Activated CD8-positive, alpha-beta T cell treated with anti-CD3 and anti-CD28 coated beads for 36 hours (primary cell): ENCODE measurements at regions of chr3 and their contacts with region 1.

Region 1: DNA sequence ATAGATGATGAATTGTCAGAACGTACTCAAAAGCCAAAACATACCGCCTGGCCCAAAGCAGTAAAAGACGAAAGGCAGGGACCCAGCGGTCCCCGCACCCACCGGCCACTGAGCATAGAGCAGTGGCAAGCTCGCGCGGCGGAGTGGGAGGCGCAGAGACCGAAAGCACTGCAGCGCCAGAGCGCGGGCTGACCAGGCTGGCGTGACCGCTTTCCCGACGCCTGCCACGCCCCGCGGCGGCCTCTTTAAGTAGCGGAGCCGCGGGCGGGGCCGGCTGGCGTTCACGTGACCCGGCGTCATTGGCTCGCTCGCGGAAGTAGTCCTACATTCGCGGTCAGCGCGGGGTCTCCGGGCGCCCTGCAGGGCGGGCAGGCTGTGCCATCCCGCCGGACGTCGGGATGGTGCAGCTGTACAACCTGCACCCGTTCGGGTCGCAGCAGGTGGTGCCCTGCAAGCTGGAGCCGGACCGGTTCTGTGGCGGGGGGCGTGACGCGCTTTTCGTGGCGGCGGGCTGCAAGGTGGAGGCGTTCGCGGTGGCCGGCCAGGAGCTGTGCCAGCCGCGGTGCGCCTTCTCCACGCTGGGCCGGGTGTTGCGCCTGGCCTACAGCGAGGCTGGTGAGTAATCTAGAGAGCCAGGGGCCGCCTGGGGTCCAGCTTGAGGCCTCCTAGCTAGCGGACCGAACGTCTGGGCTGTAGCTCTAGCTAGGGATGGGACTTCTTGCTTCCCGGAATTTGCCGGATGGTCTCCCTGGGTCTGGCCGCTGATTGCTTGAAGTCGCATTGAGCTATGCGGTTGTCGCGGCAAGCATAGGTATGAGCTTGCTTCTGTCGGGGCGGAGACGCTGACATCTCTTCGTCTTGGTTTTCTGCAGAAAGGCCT is at the start of gene HPS3:
- DNase-seq: peak; percentile 91
- ATAC-seq: peak; percentile 89
- H3K4me3 Mint-ChIP-seq: peak within 1 kb of the TSS; percentile 95
- H3K27ac Mint-ChIP-seq: peak within 1 kb of the TSS; percentile 89
- H3K4me1 Mint-ChIP-seq: peaks cover 36% of the 10 kb centered on the region
- H3K27me3 Mint-ChIP-seq: peaks cover 2% of the 10 kb centered on the region
- CTCF ChIP-seq: no peak
- total RNA-seq, gene HPS3: 16.4 to 18.2 TPM

Region 2: GRCh38 chr3:148991194-148992026 is 138.2 kb before region 1 on chr3 and contains the start of gene GYG1:
- CTCF ChIA-PET with region 1: no interaction called
- POLR2A ChIA-PET with region 1: no interaction called
- intact Hi-C with region 1: loop called (anchors 5 kb)
- DNase-seq: peak; percentile 81
- ATAC-seq: peak; percentile 87
- H3K4me3 Mint-ChIP-seq: peak within 1 kb of the TSS; percentile 79
- H3K27ac Mint-ChIP-seq: peak within 1 kb of the TSS; percentile 86
- H3K4me1 Mint-ChIP-seq: peaks cover 27% of the 10 kb centered on the region
- H3K27me3 Mint-ChIP-seq: no peaks in the 10 kb centered on the region
- CTCF ChIP-seq: peak; percentile 34
- total RNA-seq, gene GYG1: 16.0 to 18.3 TPM

Region 3: DNA sequence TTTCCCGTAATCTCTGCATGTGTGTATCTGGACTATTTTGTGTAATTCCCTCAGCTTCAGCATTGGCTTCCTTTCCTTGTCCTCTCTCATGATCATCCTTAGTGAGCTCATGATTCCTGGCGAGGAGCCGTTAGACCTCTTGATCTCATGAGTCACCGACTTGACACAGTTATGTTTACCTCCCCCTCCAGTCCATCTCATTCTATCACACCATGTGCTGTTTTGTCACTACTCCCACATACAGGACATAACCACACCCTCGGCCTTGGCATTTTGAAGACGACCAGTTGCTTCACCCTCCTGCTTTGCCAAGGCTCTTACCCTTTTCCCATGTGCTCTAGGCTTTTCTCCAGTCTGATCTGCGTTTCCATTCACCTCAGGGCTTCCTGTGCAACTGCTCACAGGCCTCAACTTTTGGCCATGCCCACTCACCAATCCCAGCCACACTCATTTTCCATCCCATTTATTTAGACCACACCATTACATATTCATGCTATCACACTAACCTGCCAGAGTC is 50.5 kb after region 1 on chr3:
- CTCF ChIA-PET with region 1: no interaction called
- POLR2A ChIA-PET with region 1: no interaction called
- intact Hi-C with region 1: loop called (anchors 5 kb)
- DNase-seq: no peak
- ATAC-seq: no peak
- H3K4me3 Mint-ChIP-seq: no peak overlapping the region
- H3K27ac Mint-ChIP-seq: no peak overlapping the region
- H3K4me1 Mint-ChIP-seq: peaks cover 3% of the 10 kb centered on the region
- H3K27me3 Mint-ChIP-seq: no peaks in the 10 kb centered on the region
- CTCF ChIP-seq: no peak

Region 4: GRCh38 chr3:149480325-149481017 is 350.9 kb after region 1 on chr3:
- CTCF ChIA-PET with region 1: no interaction called
- POLR2A ChIA-PET with region 1: no interaction called
- intact Hi-C with region 1: loop called (anchors 10 kb)
- DNase-seq: peak; percentile 74
- ATAC-seq: peak; percentile 62
- H3K4me3 Mint-ChIP-seq: no peak overlapping the region
- H3K27ac Mint-ChIP-seq: no peak overlapping the region
- H3K4me1 Mint-ChIP-seq: no peaks in the 10 kb centered on the region
- H3K27me3 Mint-ChIP-seq: peaks cover 2% of the 10 kb centered on the region
- CTCF ChIP-seq: peak; percentile 55